GM18951 (cell line): ENCODE measurements at regions of chr14 and their contacts with region 1.

Region 1: GRCh38 chr14:88181072-88181471 is 142.0 kb downstream of the KCNK10 start:
- POLR2A ChIP-seq: no peak

Region 2: GRCh38 chr14:87877877-87878276 is 303.2 kb before region 1 on chr14:
- in situ Hi-C with region 1: no loop called
- POLR2A ChIP-seq: no peak

Region 3: DNA sequence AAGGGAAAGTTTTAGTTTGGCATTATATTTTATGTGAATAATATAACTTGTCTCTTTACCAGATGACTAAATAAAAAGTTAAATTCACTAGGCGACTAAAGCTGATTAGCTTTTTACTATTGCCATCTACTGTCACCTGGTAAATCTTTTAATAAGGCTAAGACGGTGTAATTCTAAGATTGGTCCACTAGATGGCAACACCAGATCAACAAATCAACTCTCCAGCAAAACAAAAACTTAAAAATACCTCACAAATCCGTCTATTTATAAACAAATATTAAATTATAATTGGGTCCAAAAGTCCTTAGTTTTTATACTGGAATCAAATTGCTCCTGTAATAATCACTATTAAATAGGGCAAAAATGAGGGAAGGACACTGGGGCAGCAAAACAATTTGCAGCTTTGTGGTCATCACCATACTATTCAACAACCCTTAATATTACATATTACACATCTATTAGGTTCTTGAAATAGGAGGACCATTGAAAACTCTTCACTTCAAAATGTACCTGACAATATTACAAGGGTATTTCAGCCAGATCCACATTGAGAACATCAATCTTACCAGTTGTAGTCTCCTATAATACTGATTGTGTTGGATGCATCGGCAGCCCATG is 236.0 kb before region 1 on chr14:
- in situ Hi-C with region 1: loop called (anchors 5 kb)
- POLR2A ChIP-seq: no peak

Region 4: DNA sequence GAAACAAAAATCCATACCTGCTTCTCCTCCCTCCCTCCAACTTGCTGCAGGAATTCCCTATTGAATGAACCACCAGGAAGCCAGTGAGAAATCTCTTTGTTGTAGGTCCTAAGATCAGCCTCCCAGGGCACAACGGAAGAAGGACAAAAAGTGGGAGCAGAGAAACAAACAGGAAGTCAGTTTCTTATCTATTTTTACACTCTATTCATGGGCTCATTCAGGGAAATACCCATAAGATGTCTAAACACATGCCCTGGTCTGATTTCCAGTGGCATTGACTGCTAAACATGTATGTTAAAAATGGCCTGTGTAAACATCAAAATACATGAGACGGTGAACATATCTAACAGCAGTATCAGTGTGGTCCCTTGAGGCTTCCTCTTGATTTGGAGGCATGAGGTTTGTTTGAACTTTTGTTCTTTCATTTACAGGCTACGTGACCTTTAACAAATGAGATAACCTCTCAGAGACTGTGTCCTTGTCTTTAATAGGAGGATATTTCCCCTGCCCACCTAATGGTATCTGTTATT is 157.3 kb before region 1 on chr14:
- in situ Hi-C with region 1: loop called (anchors 10 kb)
- POLR2A ChIP-seq: no peak

Region 5: GRCh38 chr14:88323086-88323522 is 142.0 kb after region 1 on chr14 and contains the start of gene KCNK10:
- in situ Hi-C with region 1: no loop called
- POLR2A ChIP-seq: no peak